Left ventricle myocardium inferior (tissue), 1 donor: ENCODE measurements at regions of chr20 and their contacts with region 1.

Region 1: GRCh38 chr20:39338469-39339376 is 376.6 kb downstream of the DHX35 start:
- DNase-seq: peak; percentile 15
- H3K4me3 ChIP-seq: no peak overlapping the region
- H3K27ac ChIP-seq: peak overlapping the region; percentile 30
- H3K4me1 ChIP-seq: peaks cover 10% of the 10 kb centered on the region
- H3K27me3 ChIP-seq: no peaks in the 10 kb centered on the region
- CTCF ChIP-seq: no peak

Region 2: DNA sequence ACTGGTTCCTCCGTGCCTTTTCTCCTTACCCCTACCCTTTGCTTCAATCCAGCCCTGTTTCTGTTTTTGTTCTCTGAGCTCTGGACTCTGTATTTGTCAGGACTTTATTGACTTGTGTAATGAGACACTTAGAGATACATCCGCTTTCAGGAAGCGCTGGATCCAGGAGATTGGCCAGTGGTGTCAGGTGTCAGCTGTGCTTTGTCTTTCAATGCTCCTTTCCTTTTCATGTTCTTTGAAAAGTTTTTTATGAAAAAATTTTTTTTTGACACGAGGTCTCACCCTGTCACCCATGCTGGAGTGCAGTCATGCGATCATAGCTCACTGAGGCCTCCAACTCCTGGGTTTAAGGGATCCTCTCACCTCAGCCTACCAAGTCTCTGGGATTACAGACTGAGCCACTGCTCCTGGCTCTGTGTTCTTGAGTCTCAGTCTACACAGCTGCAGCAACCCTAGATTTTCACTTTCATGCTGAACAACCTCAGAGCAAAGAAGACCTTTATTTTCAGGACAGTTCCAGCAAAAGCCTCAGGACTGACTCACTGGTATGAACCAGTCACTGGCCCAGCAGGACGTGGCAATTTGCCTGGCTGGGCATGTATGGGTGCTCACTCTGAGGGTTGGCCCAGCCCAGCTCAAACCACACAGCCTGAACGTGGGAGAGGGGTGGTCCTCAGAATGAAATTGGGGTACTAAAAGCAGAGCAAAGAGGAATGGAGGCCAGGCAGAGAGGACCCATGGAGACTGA is 268.1 kb before region 1 on chr20:
- intact Hi-C with region 1: no loop called
- DNase-seq: no peak
- H3K4me3 ChIP-seq: no peak overlapping the region
- H3K27ac ChIP-seq: no peak overlapping the region
- H3K4me1 ChIP-seq: no peaks in the 10 kb centered on the region
- H3K27me3 ChIP-seq: peaks cover 73% of the 10 kb centered on the region
- CTCF ChIP-seq: no peak

Region 3: GRCh38 chr20:39398656-39399055 is 59.9 kb after region 1 on chr20:
- intact Hi-C with region 1: loop called (anchors 10 kb)
- DNase-seq: no peak
- H3K4me3 ChIP-seq: no peak overlapping the region
- H3K27ac ChIP-seq: no peak overlapping the region
- H3K4me1 ChIP-seq: no peaks in the 10 kb centered on the region
- H3K27me3 ChIP-seq: no peaks in the 10 kb centered on the region
- CTCF ChIP-seq: no peak